ENCODE measurements at regions of chr16 and their contacts with region 1.

Region 1: DNA sequence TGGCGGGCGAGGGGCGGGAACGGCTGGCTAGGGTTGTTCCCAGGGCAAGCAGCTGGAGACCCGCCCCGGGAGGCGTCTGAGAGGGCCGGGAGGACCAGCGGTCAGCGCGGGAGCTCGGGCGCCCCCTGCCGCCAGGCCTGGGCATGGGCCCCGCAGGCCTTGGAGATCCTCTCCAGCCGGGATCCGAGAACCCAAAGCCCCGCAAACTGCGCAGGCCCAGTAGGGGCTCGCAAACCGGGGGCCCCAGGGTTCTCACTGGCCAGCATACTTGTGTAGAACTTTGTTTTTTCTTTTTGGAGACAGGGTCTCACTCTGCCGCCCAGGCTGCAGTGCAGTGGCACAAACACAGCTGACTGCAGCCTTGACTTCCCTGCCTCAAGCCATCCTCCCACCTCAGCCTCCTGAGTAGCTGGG is 20.8 kb upstream of the ZNF423 start:
- DNase-seq: peak; percentile 83
- ATAC-seq: peak; percentile 92 to 97

Region 2: DNA sequence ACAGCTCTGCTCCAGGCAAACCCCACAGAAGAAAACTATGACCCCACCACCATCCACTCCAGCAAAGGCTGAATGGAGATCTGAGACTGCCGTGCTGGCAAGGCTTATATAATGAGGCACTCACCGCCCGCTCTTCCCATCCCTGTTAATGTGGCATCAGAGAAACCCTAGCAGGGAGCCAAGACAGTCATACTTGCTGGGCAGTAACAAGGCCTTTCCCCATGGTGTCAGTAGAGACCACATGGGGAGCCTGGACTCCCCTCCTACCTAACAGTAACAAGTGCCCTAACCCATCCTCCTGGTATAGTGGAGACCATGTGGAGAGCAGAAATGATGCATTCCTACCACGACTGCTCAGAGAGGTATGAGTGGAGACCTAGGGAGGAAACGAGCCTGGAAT is 267.9 kb before region 1 on chr16:
- intact Hi-C with region 1: loop called in 1 of 2 experiments (anchors 10 kb)
- DNase-seq: no peak
- ATAC-seq: peak; percentile 59 to 74

Region 3: DNA sequence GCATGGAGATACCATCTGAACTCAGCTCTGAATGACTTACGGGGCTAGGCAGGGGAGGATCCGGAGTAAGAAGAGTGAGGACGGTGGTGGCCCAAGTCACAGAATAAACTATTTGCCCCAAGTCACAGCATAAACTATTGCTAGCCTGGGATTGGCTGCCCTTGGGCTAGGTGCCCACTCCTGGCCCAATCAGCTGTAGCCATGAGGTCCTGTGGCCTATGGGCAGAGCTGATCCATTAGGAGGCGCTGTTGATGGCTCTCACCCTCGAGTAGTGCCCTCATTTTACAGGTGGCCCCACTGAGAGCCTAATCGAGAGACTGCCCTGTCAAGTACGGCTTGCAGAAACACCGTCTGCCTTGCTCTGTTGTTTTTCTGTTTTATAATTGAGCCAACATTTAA is 41.5 kb after region 1 on chr16:
- intact Hi-C with region 1: no loop called
- DNase-seq: no peak
- ATAC-seq: no peak

Region 4: DNA sequence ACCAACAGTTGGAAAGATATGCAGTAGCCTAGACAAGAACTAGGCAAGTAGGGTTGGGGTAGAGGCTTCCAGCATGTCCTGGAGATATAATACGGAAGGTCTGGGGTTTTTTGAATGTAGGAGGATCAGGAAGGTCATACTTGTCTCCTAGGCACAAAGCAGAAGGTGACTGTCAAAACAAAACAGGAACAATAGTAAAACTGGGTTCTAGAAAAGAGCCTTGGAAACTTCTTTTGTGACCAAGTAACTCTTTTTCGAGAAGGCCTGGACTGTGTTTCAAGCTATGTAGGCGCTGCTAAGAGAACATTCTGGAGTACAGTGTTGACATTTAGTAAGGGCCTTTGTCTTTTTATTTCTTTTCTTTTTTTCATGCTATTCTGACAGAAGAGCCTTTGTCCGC is 249.5 kb after region 1 on chr16:
- intact Hi-C with region 1: no loop called
- DNase-seq: no peak
- ATAC-seq: no peak

Region 5: DNA sequence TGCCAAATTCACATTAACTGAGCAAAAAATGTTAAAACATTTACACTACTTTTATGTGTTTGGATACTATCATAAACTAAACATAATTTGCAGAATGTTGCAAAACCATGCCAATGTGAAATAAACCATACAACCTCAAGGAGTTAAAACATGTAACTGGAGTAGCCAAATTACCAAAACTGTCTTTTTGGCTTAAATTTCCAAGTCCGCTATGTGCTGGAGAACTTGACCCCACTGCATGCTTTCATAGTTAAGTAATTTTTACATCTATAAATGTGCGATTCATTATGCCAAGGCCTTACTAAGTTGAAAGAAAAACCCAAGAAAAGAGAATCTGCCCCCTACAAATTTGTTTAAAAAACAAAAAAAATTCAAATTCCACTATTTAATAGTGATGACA is 463.9 kb after region 1 on chr16:
- intact Hi-C with region 1: no loop called
- DNase-seq: no peak
- ATAC-seq: no peak

Measured in left cardiac atrium (tissue), 4 donors.